Caco-2 (cell line): ENCODE measurements at regions of chr2 and their contacts with region 1.

Region 1: GRCh38 chr2:34012715-34013302 is 413.7 kb upstream of the FAM98A start:
- DNase-seq: peak; percentile 75 to 77
- H3K4me3 ChIP-seq: no peak overlapping the region
- H3K4me3 Mint-ChIP-seq: no peak overlapping the region
- H3K27ac Mint-ChIP-seq: no peak overlapping the region
- H3K4me1 ChIP-seq: 0 out of 2 replicates have a peak, but pooled peaks cover 3% of the 10 kb centered on the region
- H3K4me1 Mint-ChIP-seq: no peaks in the 10 kb centered on the region
- H3K27me3 ChIP-seq: no peaks in the 10 kb centered on the region
- H3K27me3 Mint-ChIP-seq: peaks cover 9% of the 10 kb centered on the region
- CTCF ChIP-seq: peak; percentile 80

Region 2: GRCh38 chr2:34738691-34739090 is 725.9 kb after region 1 on chr2:
- CTCF ChIA-PET with region 1: no interaction called
- POLR2A ChIA-PET with region 1: no interaction called
- intact Hi-C with region 1: loop called (anchors 2 kb)
- DNase-seq: peak in 1 of 2 experiments; percentile 34
- H3K4me3 ChIP-seq: no peak overlapping the region
- H3K4me3 Mint-ChIP-seq: no peak overlapping the region
- H3K27ac Mint-ChIP-seq: no peak overlapping the region
- H3K4me1 ChIP-seq: no peaks in the 10 kb centered on the region
- H3K4me1 Mint-ChIP-seq: no peaks in the 10 kb centered on the region
- H3K27me3 ChIP-seq: no peaks in the 10 kb centered on the region
- H3K27me3 Mint-ChIP-seq: peaks cover 3% of the 10 kb centered on the region
- CTCF ChIP-seq: peak; percentile 37 to 47